Naive thymus-derived CD4-positive, alpha-beta T cell (primary cell): ENCODE measurements at regions of chr12 and their contacts with region 1.

Region 1: DNA sequence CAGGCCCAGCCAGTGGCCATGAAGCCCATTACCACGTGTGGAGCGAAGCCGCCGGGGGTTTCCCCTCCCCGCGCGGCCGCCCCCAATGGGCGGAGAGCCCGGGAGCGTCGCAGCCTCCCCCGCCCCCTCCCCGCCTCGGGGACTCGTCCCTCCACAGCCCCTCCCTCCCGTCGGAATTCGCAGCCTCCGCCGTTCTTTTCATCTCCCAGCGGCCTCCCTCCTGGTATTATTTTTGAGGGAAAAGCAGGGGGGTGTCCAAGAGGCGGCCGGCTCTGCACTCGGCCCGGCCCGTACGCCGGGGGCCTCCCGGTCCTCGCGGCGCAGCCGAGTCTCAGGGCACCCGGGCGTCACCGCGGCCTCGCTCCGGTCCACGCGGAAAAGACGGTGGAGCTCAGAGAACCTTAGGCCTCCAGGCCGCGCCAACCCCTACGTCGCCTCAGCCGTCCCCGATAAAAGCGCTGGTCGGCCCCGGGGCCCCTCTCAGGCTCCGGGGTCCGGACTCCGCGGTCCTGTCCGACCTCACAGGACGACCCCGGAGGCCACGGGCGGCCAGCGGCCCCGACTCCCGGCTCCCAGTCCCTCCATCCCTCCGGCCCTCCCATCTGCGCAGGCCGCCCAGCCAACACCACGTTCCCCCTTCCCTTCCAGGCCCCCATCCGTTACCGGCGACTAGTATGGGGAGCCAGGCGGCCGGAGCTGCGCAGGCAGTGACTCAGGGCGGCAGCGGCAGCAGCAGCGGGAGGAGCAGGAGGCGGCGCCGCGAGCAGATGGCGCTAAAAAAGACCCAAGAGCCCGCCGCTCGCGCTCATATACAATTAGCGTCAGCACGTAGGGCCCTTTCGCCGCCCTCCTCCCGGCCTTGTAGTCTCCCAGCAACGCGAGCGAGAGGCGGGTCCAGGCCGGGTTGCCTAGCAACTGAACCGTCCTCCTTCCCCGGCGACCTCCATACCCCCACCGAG is at the start of gene NAP1L1:
- DNase-seq: peak; percentile 85 to 96 (median 93)
- ATAC-seq: peak; percentile 87
- H3K4me3 ChIP-seq: peak within 1 kb of the TSS; percentile 79
- H3K4me3 Mint-ChIP-seq: peak within 1 kb of the TSS; percentile 91 to 100 (median 98)
- H3K27ac ChIP-seq: peak within 1 kb of the TSS; percentile 100
- H3K27ac Mint-ChIP-seq: peak within 1 kb of the TSS; percentile 84 to 100 (median 99)
- H3K4me1 ChIP-seq: peaks cover 27 to 28% of the 10 kb centered on the region in 2 donors
- H3K4me1 Mint-ChIP-seq: peaks cover 30 to 59% (median 54%) of the 10 kb centered on the region in 7 donors
- H3K27me3 ChIP-seq: no peaks in the 10 kb centered on the region
- H3K27me3 Mint-ChIP-seq: no peaks in the 10 kb centered on the region
- total RNA-seq, gene NAP1L1: 510 to 862 (median 625) TPM

Region 2: GRCh38 chr12:75334384-75335030 is 749.7 kb before region 1 on chr12 and contains the start of gene GLIPR1L1:
- CTCF ChIA-PET with region 1: no interaction called
- POLR2A ChIA-PET with region 1: no interaction called
- intact Hi-C with region 1: loop called in 1 of 2 experiments (anchors 10 kb)
- DNase-seq: peak; percentile 58 to 79 (median 74)
- ATAC-seq: peak; percentile 91
- H3K4me3 ChIP-seq: no peak within 1 kb of the TSS
- H3K4me3 Mint-ChIP-seq: peak within 1 kb of the TSS; percentile 18 to 80 (median 74)
- H3K27ac ChIP-seq: no peak within 1 kb of the TSS
- H3K27ac Mint-ChIP-seq: peak within 1 kb of the TSS in 1 of 9 donors; percentile 3
- H3K4me1 ChIP-seq: peaks cover 0 to 5% of the 10 kb centered on the region in 2 donors
- H3K4me1 Mint-ChIP-seq: peaks cover 11 to 29% (median 18%) of the 10 kb centered on the region in 7 donors
- H3K27me3 ChIP-seq: peaks cover 0 to 6% of the 10 kb centered on the region in 2 donors
- H3K27me3 Mint-ChIP-seq: peaks cover 16 to 56% (median 31%) of the 10 kb centered on the region in 5 donors
- total RNA-seq, gene GLIPR1L1: not detected

Region 3: GRCh38 chr12:75511116-75512048 is 572.8 kb before region 1 on chr12 and contains the start of gene KRR1:
- CTCF ChIA-PET with region 1: interaction called, 4 read pairs
- POLR2A ChIA-PET with region 1: interaction called, 3 read pairs
- intact Hi-C with region 1: loop called (anchors 1 kb)
- DNase-seq: peak; percentile 60 to 93 (median 90)
- ATAC-seq: peak; percentile 98
- H3K4me3 ChIP-seq: peak within 1 kb of the TSS; percentile 90
- H3K4me3 Mint-ChIP-seq: peak within 1 kb of the TSS; percentile 96 to 100 (median 99)
- H3K27ac ChIP-seq: peak within 1 kb of the TSS; percentile 89
- H3K27ac Mint-ChIP-seq: peak within 1 kb of the TSS; percentile 96 to 100 (median 99)
- H3K4me1 ChIP-seq: peaks cover 13% of the 10 kb centered on the region in 2 donors
- H3K4me1 Mint-ChIP-seq: peaks cover 15 to 47% (median 38%) of the 10 kb centered on the region in 7 donors
- H3K27me3 ChIP-seq: no peaks in the 10 kb centered on the region
- H3K27me3 Mint-ChIP-seq: no peaks in the 10 kb centered on the region
- total RNA-seq, gene KRR1: 69.3 to 120 (median 74.3) TPM

Region 4: DNA sequence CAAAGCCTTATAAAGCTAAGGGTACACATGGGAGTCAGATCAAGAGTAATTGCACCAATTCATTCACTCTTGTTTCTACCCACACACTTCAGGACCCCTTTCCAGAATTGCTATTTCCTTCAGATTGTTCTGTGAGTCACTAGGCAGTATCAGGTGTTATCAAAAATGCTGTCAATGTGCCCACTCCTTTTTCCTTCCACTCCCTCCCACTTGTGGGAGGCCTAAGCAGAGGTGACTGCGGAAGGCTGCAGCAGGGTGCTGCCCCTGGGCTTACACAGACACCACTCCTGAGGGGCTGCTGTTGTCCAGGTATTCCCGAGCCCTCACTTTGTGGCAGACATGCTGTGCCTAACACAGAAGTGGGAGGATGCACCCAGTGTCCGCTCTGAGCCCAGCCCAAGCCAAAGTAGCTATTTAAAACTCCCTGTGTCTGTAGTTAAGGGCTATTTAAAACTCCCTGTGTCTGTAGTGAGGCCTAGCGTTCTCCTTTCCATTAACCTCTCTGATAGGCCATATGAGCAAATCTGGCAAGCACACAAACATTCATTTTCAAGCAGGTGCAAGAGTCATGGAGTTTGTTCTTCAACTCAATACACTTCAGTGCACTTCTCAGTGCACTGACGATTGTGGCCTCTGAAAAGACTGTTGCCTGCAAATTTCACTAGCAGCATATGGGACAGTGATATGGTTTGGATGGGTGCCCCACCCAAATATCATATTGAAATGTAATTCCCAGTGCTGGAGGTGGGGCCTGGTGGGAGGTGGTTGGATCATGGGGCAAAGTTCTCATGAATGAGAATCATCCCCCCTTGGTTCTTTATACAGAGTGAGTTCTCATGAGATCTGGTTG is 170.5 kb before region 1 on chr12:
- CTCF ChIA-PET with region 1: no interaction called
- POLR2A ChIA-PET with region 1: no interaction called
- intact Hi-C with region 1: no loop called
- DNase-seq: peak in 1 of 9 donors; percentile 68
- ATAC-seq: no peak
- H3K4me3 ChIP-seq: no peak overlapping the region
- H3K4me3 Mint-ChIP-seq: no peak overlapping the region
- H3K27ac ChIP-seq: no peak overlapping the region
- H3K27ac Mint-ChIP-seq: no peak overlapping the region
- H3K4me1 ChIP-seq: no peaks in the 10 kb centered on the region
- H3K4me1 Mint-ChIP-seq: peaks cover 0 to 17% (median 0%) of the 10 kb centered on the region in 7 donors
- H3K27me3 ChIP-seq: no peaks in the 10 kb centered on the region
- H3K27me3 Mint-ChIP-seq: peaks cover 0 to 4% (median 0%) of the 10 kb centered on the region in 5 donors

Region 5: GRCh38 chr12:75977952-75978671 is 106.1 kb before region 1 on chr12:
- CTCF ChIA-PET with region 1: no interaction called
- POLR2A ChIA-PET with region 1: interaction called, 3 read pairs
- intact Hi-C with region 1: loop called (anchors 1 kb)
- DNase-seq: peak in 8 of 9 donors; percentile 4 to 80 (median 38)
- ATAC-seq: peak; percentile 94
- H3K4me3 ChIP-seq: no peak overlapping the region
- H3K4me3 Mint-ChIP-seq: peak overlapping the region in 7 of 10 donors; percentile 24 to 64 (median 51)
- H3K27ac ChIP-seq: peak overlapping the region; percentile 21
- H3K27ac Mint-ChIP-seq: peak overlapping the region; percentile 41 to 90 (median 74)
- H3K4me1 ChIP-seq: peaks cover 15 to 26% of the 10 kb centered on the region in 2 donors
- H3K4me1 Mint-ChIP-seq: peaks cover 21 to 58% (median 26%) of the 10 kb centered on the region in 7 donors
- H3K27me3 ChIP-seq: no peaks in the 10 kb centered on the region
- H3K27me3 Mint-ChIP-seq: no peaks in the 10 kb centered on the region

Region 6: DNA sequence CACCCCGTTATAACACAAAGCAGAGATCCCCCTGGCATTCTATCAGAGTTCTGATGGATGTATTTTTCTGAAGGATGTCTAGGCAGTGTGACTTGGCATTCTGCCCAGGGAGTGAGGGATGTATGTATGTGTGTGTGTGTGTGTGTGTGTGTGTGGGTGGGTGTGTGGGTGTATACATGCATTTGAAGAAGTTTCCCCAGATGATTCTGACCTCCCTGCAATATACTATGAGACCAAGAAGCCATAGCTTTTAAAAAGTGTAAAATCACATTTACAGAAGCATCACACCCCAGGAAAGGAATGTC is 60.0 kb after region 1 on chr12:
- CTCF ChIA-PET with region 1: no interaction called
- POLR2A ChIA-PET with region 1: no interaction called
- intact Hi-C with region 1: loop called in 1 of 2 experiments (anchors 5 kb)
- DNase-seq: peak in 8 of 9 donors; percentile 8 to 57 (median 38)
- ATAC-seq: peak; percentile 50
- H3K4me3 ChIP-seq: no peak overlapping the region
- H3K4me3 Mint-ChIP-seq: peak overlapping the region in 8 of 10 donors; percentile 1 to 58 (median 33)
- H3K27ac ChIP-seq: no peak overlapping the region
- H3K27ac Mint-ChIP-seq: peak overlapping the region in 6 of 9 donors; percentile 2 to 60 (median 22)
- H3K4me1 ChIP-seq: peaks cover 9 to 15% of the 10 kb centered on the region in 2 donors
- H3K4me1 Mint-ChIP-seq: peaks cover 13 to 27% (median 23%) of the 10 kb centered on the region in 7 donors
- H3K27me3 ChIP-seq: no peaks in the 10 kb centered on the region
- H3K27me3 Mint-ChIP-seq: no peaks in the 10 kb centered on the region

Region 7: DNA sequence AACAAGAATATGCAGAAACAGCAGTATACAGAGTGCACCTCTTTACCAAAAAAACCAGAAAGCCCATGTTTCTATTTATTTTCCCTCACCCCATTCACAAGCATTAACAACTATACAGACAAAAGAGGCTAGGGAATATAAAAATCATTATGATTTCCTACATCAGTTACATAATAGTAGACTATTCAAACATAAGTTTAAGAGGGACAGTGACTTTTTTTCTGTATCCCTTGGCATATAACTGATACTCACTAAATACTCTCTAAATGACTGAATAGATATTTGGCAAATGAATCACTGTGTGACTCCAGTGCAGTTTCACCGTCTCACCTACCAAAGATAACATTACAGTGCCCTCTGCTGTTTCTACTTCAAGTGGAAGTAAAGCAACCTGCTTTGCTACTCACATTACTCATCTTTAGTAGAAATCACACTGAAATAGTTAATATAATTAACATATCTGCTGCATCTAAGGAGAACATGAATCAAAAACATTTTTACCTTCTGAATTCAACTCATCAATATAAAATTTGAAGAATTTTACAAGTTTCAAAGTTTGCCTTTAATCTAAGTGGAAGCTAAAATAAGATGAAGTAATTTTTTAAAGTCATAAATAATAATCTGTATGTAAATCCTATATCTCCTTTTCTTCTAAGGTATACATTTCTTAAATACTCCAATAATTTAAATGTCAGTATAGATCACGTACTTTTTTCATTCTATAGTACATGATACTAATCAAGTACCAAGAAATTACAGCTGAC is 371.6 kb after region 1 on chr12:
- CTCF ChIA-PET with region 1: interaction called, 3 read pairs
- POLR2A ChIA-PET with region 1: no interaction called
- intact Hi-C with region 1: loop called (anchors 1 to 10 kb)
- DNase-seq: peak in 6 of 9 donors; percentile 15 to 49 (median 38)
- ATAC-seq: peak; percentile 78
- H3K4me3 ChIP-seq: no peak overlapping the region
- H3K4me3 Mint-ChIP-seq: peak overlapping the region in 1 of 10 donors; percentile 38
- H3K27ac ChIP-seq: no peak overlapping the region
- H3K27ac Mint-ChIP-seq: peak overlapping the region in 3 of 9 donors; percentile 36 to 65 (median 46)
- H3K4me1 ChIP-seq: peaks cover 14 to 16% of the 10 kb centered on the region in 2 donors
- H3K4me1 Mint-ChIP-seq: peaks cover 10 to 58% (median 37%) of the 10 kb centered on the region in 7 donors
- H3K27me3 ChIP-seq: no peaks in the 10 kb centered on the region
- H3K27me3 Mint-ChIP-seq: no peaks in the 10 kb centered on the region

Region 8: GRCh38 chr12:77065361-77066204 is 981.4 kb after region 1 on chr12 and contains the start of gene E2F7:
- CTCF ChIA-PET with region 1: no interaction called
- POLR2A ChIA-PET with region 1: no interaction called
- intact Hi-C with region 1: loop called in 1 of 2 experiments (anchors 10 kb)
- DNase-seq: peak; percentile 47 to 93 (median 69)
- ATAC-seq: peak; percentile 91
- H3K4me3 ChIP-seq: peak within 1 kb of the TSS; percentile 63
- H3K4me3 Mint-ChIP-seq: peak within 1 kb of the TSS; percentile 79 to 88 (median 85)
- H3K27ac ChIP-seq: no peak within 1 kb of the TSS
- H3K27ac Mint-ChIP-seq: peak within 1 kb of the TSS in 2 of 9 donors; percentile 69 to 80
- H3K4me1 ChIP-seq: peaks cover 0 to 7% of the 10 kb centered on the region in 2 donors
- H3K4me1 Mint-ChIP-seq: peaks cover 5 to 41% (median 8%) of the 10 kb centered on the region in 7 donors
- H3K27me3 ChIP-seq: no peaks in the 10 kb centered on the region
- H3K27me3 Mint-ChIP-seq: peaks cover 16 to 38% (median 30%) of the 10 kb centered on the region in 5 donors
- total RNA-seq, gene E2F7: 0.22 to 17.6 TPM in 2 of 5 experiments, not detected in the others